Left lung (tissue), 14 donors: ENCODE measurements at regions of chr10 and their contacts with region 1.

Region 1: DNA sequence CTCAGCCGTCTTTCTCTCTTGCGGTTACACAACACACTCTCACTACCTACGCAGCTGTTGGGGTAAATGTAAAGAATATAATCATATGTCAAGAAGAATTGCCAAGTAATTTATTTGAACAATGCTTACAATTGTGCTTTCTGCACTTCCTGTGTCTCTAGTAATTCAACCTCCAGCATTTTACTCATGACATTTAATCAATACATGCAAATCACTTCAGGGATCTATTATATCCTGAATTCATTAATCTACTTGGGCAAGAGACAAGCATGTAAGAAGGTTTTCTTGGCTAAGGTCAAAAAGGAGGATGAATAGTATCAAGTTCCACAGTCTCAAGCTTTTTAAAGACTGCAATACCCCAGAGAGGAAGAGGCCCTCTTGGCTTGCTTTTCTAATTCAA is 562.9 kb upstream of the ADARB2 start:
- DNase-seq: no peak
- ATAC-seq: no peak
- H3K4me3 ChIP-seq: no peak overlapping the region
- H3K27ac ChIP-seq: no peak overlapping the region
- H3K4me1 ChIP-seq: no peaks in the 10 kb centered on the region
- H3K27me3 ChIP-seq: no peaks in the 10 kb centered on the region
- CTCF ChIP-seq: no peak

Region 2: GRCh38 chr10:1923586-1923985 is 376.6 kb before region 1 on chr10:
- intact Hi-C with region 1: no loop called
- DNase-seq: no peak
- ATAC-seq: no peak
- H3K4me3 ChIP-seq: no peak overlapping the region
- H3K27ac ChIP-seq: no peak overlapping the region
- H3K4me1 ChIP-seq: no peaks in the 10 kb centered on the region
- H3K27me3 ChIP-seq: no peaks in the 10 kb centered on the region
- CTCF ChIP-seq: no peak

Region 3: GRCh38 chr10:2367083-2367482 is 66.9 kb after region 1 on chr10:
- intact Hi-C with region 1: loop called in 1 of 2 experiments (anchors 5 kb)
- DNase-seq: no peak
- ATAC-seq: no peak
- H3K4me3 ChIP-seq: no peak overlapping the region
- H3K27ac ChIP-seq: no peak overlapping the region
- H3K4me1 ChIP-seq: no peaks in the 10 kb centered on the region
- H3K27me3 ChIP-seq: no peaks in the 10 kb centered on the region
- CTCF ChIP-seq: no peak